GM18951 (cell line): ENCODE measurements at regions of chr11 and their contacts with region 1.

Region 1: GRCh38 chr11:25981998-25982397 is 349.9 kb upstream of the ANO3 start:
- POLR2A ChIP-seq: no peak

Region 2: DNA sequence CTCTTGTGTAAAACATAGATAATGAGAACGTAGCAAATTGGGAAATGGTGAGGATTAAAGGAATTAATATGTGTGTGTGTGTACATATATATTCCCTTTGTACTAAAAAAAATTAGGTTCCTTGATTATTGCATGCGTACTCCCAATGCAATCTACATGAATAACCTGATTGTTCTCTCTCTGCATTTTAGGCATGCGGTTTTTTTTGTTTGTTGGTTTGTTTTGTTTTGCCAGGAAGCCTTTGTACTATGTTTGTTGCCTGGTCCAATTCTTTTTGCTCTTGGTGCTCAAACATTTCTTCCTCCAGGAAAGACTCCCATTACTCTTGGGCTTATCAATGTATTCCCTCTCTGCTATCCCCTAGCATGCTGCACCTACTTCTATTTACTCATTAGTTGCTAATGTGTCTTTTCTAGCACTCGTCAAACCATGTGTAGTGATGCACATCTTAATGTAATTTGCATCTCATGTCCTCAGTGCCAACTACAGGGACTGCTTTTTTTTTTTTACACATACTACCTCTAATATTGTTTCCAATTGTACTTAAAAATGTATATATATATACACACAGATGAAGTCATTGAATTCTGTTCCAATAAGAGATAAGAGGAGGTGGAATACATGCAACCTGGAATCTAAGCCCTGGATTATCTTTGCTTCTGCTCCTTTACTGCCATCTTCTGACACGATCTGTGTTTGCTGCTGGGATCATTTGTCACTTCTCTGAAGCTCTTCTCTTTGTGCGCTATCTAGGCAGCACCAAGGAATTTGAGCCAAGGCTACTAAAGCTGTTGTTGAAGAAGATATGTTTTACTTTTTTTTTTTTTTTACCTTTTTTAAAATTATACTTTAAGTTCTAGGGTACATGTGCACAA is 152.7 kb after region 1 on chr11:
- in situ Hi-C with region 1: loop called (anchors 10 kb)
- POLR2A ChIP-seq: no peak

Region 3: DNA sequence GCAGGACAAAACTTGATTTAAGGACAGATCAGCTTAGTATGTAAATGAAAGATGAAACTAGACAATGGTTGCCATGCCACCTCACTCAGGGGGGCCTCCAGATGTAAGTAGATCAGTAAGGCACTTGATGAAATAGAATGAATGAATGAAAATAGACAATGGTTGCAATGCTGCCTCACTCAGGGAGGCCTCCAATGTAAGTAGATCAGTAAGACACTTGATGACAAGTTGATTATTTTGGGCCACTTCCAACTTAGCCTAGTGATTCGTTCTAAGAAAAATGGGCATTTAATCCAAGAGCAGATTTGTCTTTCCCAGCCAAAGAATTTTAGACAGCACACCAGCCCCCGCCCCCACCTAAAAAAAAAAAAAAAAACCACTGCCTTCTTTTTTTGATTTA is 759.0 kb after region 1 on chr11:
- in situ Hi-C with region 1: no loop called
- POLR2A ChIP-seq: no peak